A549 (cell line): ENCODE measurements at regions of chr14 and their contacts with region 1.

Region 1: DNA sequence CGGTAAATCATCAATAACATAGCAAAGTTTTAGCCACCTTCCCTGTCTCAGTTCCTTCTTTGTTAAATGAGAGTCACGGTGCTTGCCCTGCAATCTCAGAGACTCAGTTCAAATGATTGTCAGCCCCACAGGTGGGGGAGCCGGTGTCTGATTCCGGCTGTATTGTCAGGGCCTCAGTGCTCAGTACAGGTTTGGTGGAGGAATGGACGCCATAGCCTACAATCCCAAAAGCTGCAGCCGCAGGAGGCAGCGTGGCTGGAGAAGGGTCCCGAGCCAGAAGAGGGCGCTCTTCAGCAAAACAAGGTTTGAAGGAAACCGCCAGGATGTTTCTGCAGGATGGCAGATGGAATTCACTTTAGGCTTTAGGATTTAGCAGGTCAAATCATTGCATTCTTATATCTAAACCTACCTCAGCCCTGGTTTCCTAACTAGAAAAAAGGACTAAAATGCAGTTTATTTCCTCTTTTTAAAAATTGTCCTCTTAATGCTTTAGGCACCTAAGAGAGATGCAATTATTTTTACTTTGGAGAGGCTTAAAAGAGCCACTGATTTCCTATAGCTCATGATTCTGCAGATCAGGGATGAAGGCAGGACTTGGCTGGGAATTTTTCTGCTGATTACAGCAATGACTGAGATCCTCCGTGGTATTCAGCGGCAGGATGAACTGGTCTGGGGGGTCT is 29.2 kb downstream of the FOS start:
- DNase-seq: peak; percentile 64 to 85
- ATAC-seq: peak; percentile 89 to 91
- H3K4me3 ChIP-seq: no peak overlapping the region
- H3K27ac ChIP-seq: peak overlapping the region; percentile 51 to 66; a peak in 4 of 6 replicates
- H3K4me1 ChIP-seq: peaks cover 29% of the 10 kb centered on the region
- CTCF ChIP-seq: peak; percentile 95
- EP300 ChIP-seq: no peak
- POLR2A ChIP-seq: no peak
- RAD21 ChIP-seq: peak; percentile 95

Region 2: GRCh38 chr14:75293920-75294642 is 13.8 kb before region 1 on chr14:
- CTCF ChIA-PET with region 1: interaction called, 55 read pairs
- POLR2A ChIA-PET with region 1: no interaction called
- DNase-seq: peak; percentile 97 to 98
- ATAC-seq: peak; percentile 90 to 96
- H3K4me3 ChIP-seq: peak overlapping the region; percentile 69
- H3K27ac ChIP-seq: peak overlapping the region; percentile 89 to 90
- H3K4me1 ChIP-seq: peaks cover 18% of the 10 kb centered on the region
- CTCF ChIP-seq: no peak
- EP300 ChIP-seq: no peak
- POLR2A ChIP-seq: peak; percentile 51
- RAD21 ChIP-seq: no peak

Region 3: DNA sequence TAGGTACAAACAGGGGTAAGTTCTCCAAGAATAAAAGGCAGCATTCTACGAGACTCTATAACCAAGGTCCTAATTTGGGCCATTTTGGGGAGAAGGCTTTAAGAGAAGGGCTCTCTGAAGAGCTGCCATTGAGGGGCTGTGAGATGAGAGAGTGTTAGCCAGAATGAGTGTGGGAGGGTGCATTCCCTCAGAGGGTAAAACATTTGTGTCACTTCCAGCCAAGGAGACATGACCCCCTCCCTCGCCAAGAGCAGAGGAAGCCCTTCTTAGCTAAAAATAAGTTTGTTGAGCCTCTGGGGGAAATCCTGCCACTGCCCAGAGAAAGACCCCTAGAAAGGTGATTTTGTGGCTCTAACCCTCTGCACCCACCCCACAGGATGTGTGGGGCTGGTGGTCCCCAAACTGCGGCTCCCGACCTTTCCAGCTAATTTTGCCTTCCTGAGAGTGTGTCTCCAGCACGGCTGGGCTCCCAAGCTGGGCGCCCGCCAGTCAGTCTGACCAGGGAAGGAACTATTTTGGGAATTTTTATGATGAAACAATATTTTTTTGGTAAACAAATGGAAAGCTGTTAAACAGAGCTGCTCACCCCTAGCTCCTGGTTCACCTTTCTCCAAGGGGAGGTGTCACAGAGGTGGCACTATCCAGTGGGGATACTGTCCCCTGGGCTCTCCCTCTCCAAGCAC is 54.1 kb after region 1 on chr14:
- CTCF ChIA-PET with region 1: interaction called, 12 read pairs
- POLR2A ChIA-PET with region 1: no interaction called
- DNase-seq: no peak
- ATAC-seq: no peak; a peak in 1 of 6 replicates
- H3K4me3 ChIP-seq: no peak overlapping the region
- H3K27ac ChIP-seq: no peak overlapping the region
- H3K4me1 ChIP-seq: peaks cover 11% of the 10 kb centered on the region; the same call in 1 of the 3 replicates
- CTCF ChIP-seq: no peak
- EP300 ChIP-seq: no peak
- POLR2A ChIP-seq: no peak
- RAD21 ChIP-seq: no peak

Region 4: DNA sequence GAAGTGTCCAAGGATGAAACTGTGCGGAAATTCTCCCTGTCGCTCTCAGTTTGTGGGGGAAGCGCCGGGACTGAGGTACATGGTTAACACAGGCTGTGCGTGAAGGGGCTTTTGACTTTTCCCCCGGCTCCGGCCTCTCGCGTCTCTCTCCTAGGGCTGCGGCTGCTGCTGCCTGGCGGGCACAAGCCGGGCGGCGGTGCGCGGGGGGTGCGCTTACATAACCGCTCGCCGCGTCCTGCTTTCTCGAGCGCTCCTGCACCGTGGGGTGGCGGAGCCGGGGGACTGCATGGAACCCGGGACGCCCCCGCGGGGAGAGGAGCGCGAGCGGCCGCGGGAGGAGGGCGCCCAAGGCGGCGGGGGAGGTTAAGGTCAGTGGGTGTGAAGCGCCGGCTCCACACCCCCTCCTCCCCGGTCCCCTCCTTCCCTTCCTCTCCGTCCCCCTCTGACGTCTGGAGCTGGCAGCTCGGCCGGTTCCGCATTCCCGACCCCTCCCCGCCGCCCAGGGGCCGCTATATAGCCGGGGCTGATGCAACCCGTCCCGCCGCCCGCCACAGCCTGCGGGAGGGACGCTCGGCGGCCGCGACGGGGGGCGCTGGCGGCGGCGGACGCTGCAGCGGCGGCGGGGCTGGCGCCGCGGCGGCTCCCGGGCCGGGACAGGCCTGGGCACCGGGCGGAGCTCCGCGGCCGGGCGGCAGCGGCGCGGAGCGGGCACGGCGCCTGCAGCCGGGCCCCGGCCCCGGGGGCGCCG is 119.8 kb after region 1 on chr14 and contains the start of gene JDP2:
- CTCF ChIA-PET with region 1: interaction called, 9 read pairs
- POLR2A ChIA-PET with region 1: interaction called, 11 read pairs
- DNase-seq: peak; percentile 64 to 80
- ATAC-seq: peak; percentile 83 to 92
- H3K4me3 ChIP-seq: peak within 1 kb of the TSS; percentile 83
- H3K27ac ChIP-seq: peak within 1 kb of the TSS; percentile 94 to 99
- H3K4me1 ChIP-seq: peaks cover 43% of the 10 kb centered on the region
- CTCF ChIP-seq: no peak
- EP300 ChIP-seq: peak; percentile 29 to 59; a peak in 1 of 5 replicates
- POLR2A ChIP-seq: peak; percentile 37; the same call in 1 of the 2 replicates
- RAD21 ChIP-seq: 0 out of 5 replicates have a peak, but pooled peaks of 1 of the 2 experiments have one; percentile 19
- polyA plus RNA-seq, gene JDP2: 17.2 and 31.2 TPM in 2 replicates

Region 5: DNA sequence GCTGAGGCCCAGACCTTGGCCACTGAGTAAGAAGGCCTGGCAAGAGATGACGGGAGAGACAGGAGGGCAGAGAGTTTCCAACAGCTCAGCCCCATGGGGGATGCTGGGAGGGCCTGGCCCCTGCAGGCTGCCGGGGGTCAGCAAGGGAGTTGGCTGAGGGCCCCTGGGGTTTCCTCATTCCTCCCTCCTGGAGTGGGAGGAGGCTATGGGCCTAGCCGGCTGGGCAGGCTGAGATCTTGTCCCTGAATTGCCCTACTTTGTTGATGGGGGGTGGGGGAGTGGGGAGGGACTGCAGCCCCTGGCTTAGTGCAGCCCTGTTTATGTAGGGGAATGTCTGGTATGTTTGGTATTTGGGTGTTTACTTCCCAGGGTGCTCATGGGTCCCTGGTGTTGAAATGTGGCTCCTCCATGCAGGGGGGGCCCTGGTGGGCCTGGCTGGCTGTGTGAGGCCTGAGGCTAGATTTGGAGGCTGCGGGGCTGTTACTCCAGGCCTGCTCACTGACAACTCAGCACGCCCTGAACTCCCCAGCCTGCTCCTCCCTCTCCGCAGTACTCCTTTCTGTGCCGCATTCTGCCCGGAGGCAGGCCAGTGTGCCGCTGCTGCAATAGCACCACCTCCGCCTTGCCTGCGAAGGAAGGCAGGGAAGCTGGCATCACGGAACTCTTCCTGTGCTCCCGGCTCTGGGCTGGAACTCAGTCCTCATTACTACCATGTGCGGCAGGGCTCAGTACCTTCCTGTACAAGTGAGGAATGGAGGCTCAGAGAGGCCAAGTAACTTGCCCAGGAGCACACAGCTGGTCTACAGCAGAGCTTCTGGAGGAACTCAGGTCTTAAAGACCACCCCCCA is 145.3 kb after region 1 on chr14:
- CTCF ChIA-PET with region 1: interaction called, 21 read pairs
- POLR2A ChIA-PET with region 1: no interaction called
- DNase-seq: peak; percentile 56 to 80
- ATAC-seq: peak; percentile 69 to 84
- H3K4me3 ChIP-seq: 0 out of 3 replicates have a peak overlapping the region, but pooled peaks have one; percentile 6
- H3K27ac ChIP-seq: peak overlapping the region; percentile 73 to 87
- H3K4me1 ChIP-seq: peaks cover 82% of the 10 kb centered on the region
- CTCF ChIP-seq: no peak
- EP300 ChIP-seq: peak in 1 of 2 experiments; percentile 66; a peak in 1 of 5 replicates
- POLR2A ChIP-seq: no peak
- RAD21 ChIP-seq: no peak; a peak in 1 of 5 replicates

Region 6: GRCh38 chr14:75476274-75476995 is 168.6 kb after region 1 on chr14:
- CTCF ChIA-PET with region 1: interaction called, 26 read pairs
- POLR2A ChIA-PET with region 1: no interaction called
- DNase-seq: no peak
- ATAC-seq: peak in 1 of 2 experiments; percentile 31; a peak in 3 of 6 replicates
- H3K4me3 ChIP-seq: no peak overlapping the region
- H3K27ac ChIP-seq: no peak overlapping the region
- H3K4me1 ChIP-seq: no peaks in the 10 kb centered on the region
- CTCF ChIP-seq: no peak
- EP300 ChIP-seq: no peak
- POLR2A ChIP-seq: no peak
- RAD21 ChIP-seq: no peak

Region 7: GRCh38 chr14:75642056-75642455 is 334.2 kb after region 1 on chr14:
- CTCF ChIA-PET with region 1: no interaction called
- POLR2A ChIA-PET with region 1: no interaction called
- DNase-seq: no peak
- ATAC-seq: no peak
- H3K4me3 ChIP-seq: no peak overlapping the region
- H3K27ac ChIP-seq: no peak overlapping the region
- H3K4me1 ChIP-seq: peaks cover 24% of the 10 kb centered on the region
- CTCF ChIP-seq: no peak
- EP300 ChIP-seq: no peak
- POLR2A ChIP-seq: no peak
- RAD21 ChIP-seq: no peak

Region 8: DNA sequence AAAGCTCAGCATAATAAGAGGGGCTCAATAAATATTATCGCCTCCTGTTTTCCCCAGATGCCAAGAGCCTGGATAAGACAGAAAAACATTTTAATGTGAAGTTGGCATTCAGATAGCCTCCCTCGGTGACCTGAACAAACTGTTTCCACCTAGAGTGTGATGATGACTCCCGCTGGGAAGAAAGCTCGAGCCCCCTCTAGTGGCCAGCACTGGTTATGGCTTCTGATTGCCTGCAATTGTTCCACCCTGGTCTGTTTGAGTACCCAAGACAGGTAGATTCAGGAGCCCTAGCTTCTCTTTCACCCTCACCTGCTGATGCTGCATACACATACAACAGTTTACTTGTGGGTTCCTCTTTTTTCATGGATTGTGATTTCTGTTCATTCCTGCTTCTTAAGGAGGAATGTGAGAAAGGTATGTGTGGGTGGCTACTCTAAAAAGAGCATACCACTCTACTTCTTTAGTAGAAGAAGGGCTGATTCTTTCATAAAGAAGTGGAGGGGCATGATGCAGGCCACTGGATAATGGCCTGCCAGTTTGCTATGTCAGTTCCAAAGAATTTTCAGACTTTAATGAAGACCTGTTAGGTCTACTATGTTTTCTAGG is 346.4 kb after region 1 on chr14:
- CTCF ChIA-PET with region 1: interaction called, 46 read pairs
- POLR2A ChIA-PET with region 1: no interaction called
- DNase-seq: peak; percentile 66 to 86
- ATAC-seq: peak; percentile 93 to 98
- H3K4me3 ChIP-seq: no peak overlapping the region
- H3K27ac ChIP-seq: peak overlapping the region; percentile 2 to 24; a peak in 1 of 6 replicates
- H3K4me1 ChIP-seq: peaks cover 16% of the 10 kb centered on the region; the same call in 2 of the 3 replicates
- CTCF ChIP-seq: peak; percentile 94
- EP300 ChIP-seq: no peak
- POLR2A ChIP-seq: no peak
- RAD21 ChIP-seq: peak; percentile 91 to 95